Ovary (tissue), 10 donors: ENCODE measurements at regions of chr20 and their contacts with region 1.

Region 1: GRCh38 chr20:35699127-35699975 is at the starts of genes NFS1 and ROMO1:
- DNase-seq: peak; percentile 79 to 91 (median 85)
- H3K4me3 ChIP-seq: peak within 1 kb of the TSS; percentile 67
- H3K27ac ChIP-seq: peak within 1 kb of the TSS; percentile 65 to 77
- H3K4me1 ChIP-seq: peaks cover 7% of the 10 kb centered on the region
- H3K27me3 ChIP-seq: no peaks in the 10 kb centered on the region
- CTCF ChIP-seq: peak in 2 of 3 donors; percentile 23 to 31
- EP300 ChIP-seq: no peak
- POLR2A ChIP-seq: peak; percentile 66
- total RNA-seq, gene NFS1: 17.3 to 33.7 (median 29.4) TPM
- total RNA-seq, gene ROMO1: 98.7 to 404 (median 112) TPM

Region 2: DNA sequence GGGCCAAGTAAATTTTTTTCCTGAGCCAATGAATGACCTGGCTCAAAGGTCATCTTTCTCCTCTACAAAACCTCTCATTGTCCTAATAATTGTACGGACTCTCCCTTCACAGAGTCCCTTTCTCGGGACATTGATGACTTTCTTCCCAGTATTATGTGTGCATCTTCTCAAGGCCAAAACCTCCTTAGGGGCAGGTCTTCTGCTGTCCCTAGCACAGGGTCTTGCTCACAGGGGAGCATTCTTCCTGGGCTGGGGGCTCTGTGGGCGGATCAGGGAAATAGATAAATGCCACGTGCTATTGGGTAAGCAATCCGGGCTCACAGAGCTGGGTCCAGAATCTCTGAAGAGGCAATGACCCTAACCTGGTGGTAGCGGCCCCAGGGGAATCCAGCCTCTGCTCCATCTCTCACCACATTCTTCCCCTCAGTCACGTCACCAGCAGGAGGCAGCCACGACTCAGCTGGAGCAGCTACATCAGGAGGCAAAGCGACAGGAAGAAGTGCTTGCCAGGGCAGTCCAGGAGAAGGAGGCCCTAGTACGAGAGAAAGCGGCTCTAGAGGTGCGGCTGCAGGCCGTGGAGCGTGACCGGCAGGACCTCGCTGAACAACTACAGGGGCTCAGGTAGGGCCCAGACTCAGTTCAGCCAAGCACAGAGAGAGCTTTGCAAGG is 220.4 kb before region 1 on chr20:
- intact Hi-C with region 1: loop called in 1 of 4 experiments (anchors 10 kb)
- DNase-seq: no peak
- H3K4me3 ChIP-seq: no peak overlapping the region
- H3K27ac ChIP-seq: no peak overlapping the region
- H3K4me1 ChIP-seq: no peaks in the 10 kb centered on the region
- H3K27me3 ChIP-seq: no peaks in the 10 kb centered on the region
- CTCF ChIP-seq: no peak
- EP300 ChIP-seq: no peak
- POLR2A ChIP-seq: no peak

Region 3: GRCh38 chr20:35601008-35601973 is 98.1 kb before region 1 on chr20:
- intact Hi-C with region 1: loop called in 1 of 4 experiments (anchors 10 kb)
- DNase-seq: peak; percentile 74 to 88 (median 82)
- H3K4me3 ChIP-seq: peak overlapping the region; percentile 38
- H3K27ac ChIP-seq: no peak overlapping the region
- H3K4me1 ChIP-seq: peaks cover 6% of the 10 kb centered on the region
- H3K27me3 ChIP-seq: no peaks in the 10 kb centered on the region
- CTCF ChIP-seq: peak in 2 of 3 donors; percentile 48 to 54
- EP300 ChIP-seq: no peak
- POLR2A ChIP-seq: no peak

Region 4: GRCh38 chr20:35664544-35665221 is 34.7 kb before region 1 on chr20 and contains the starts of genes CPNE1 and RBM12:
- intact Hi-C with region 1: no loop called
- DNase-seq: peak; percentile 92 to 95 (median 94)
- H3K4me3 ChIP-seq: peak within 1 kb of the TSS; percentile 86
- H3K27ac ChIP-seq: peak within 1 kb of the TSS; percentile 94
- H3K4me1 ChIP-seq: peaks cover 6% of the 10 kb centered on the region
- H3K27me3 ChIP-seq: no peaks in the 10 kb centered on the region
- CTCF ChIP-seq: peak in 2 of 3 donors; percentile 5 to 16
- EP300 ChIP-seq: peak; percentile 26
- POLR2A ChIP-seq: peak; percentile 99
- total RNA-seq, gene CPNE1: 97.5 to 173 (median 165) TPM
- total RNA-seq, gene RBM12: 30.0 to 130 (median 107) TPM